MCF 10A (cell line): ENCODE measurements at regions of chr3 and their contacts with region 1.

Region 1: GRCh38 chr3:102354818-102355515 is 79.8 kb upstream of the ZPLD1 start:
- DNase-seq: peak; percentile 75
- H3K4me3 Mint-ChIP-seq: no peak overlapping the region
- H3K27ac Mint-ChIP-seq: peak overlapping the region; percentile 75
- H3K4me1 Mint-ChIP-seq: peaks cover 30% of the 10 kb centered on the region
- H3K27me3 Mint-ChIP-seq: no peaks in the 10 kb centered on the region
- CTCF ChIP-seq: no peak

Region 2: DNA sequence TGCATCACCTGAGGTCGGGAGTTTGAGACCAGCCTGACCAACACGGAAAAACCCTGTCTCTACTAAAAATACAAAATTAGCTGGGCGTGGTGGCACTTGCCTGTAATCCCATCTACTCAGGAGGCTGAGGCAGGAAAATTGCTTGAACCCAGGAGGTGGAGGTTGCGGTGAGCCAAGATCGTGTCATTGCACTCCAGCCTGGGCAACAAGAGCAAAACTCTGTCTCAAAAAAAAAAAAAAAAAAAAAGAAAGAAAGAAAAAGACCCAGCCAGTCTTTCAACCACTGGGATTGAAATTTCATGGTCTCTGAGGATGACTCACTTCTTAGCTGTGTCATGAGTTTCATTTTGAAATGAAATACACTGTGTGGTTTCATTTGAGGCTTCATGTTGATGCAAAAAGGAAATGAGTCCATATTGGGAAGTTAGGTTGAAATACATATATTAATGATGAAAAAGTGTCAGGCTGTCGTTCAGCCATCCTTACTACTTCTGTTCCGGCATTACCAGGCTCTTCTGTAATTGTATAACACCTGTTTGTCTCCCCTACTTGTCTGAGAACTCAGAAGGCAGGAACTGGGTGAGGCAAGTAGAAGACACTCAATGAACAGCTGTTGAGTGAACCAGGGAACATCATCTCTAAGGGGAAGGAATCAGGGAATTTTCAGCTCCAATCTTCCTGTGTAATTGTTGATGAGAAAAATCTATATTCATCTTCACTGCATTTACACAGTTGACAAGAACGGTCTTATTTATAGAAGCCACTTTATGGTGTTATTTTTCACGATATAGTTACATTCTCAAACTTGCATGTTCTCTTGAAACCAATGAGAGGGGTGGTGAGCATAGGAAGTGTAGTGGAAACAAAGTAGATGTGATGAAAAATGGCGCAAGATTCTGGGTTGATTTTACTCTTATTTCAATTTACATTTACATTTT is 418.3 kb before region 1 on chr3:
- CTCF ChIA-PET with region 1: no interaction called
- POLR2A ChIA-PET with region 1: no interaction called
- intact Hi-C with region 1: no loop called
- DNase-seq: peak; percentile 84
- H3K4me3 Mint-ChIP-seq: no peak overlapping the region
- H3K27ac Mint-ChIP-seq: peak overlapping the region; percentile 88
- H3K4me1 Mint-ChIP-seq: peaks cover 5% of the 10 kb centered on the region
- H3K27me3 Mint-ChIP-seq: no peaks in the 10 kb centered on the region
- CTCF ChIP-seq: no peak

Region 3: GRCh38 chr3:102235679-102236078 is 119.3 kb before region 1 on chr3:
- CTCF ChIA-PET with region 1: interaction called, 4 read pairs
- POLR2A ChIA-PET with region 1: no interaction called
- intact Hi-C with region 1: loop called (anchors 10 kb)
- DNase-seq: peak; percentile 41
- H3K4me3 Mint-ChIP-seq: no peak overlapping the region
- H3K27ac Mint-ChIP-seq: no peak overlapping the region
- H3K4me1 Mint-ChIP-seq: no peaks in the 10 kb centered on the region
- H3K27me3 Mint-ChIP-seq: no peaks in the 10 kb centered on the region
- CTCF ChIP-seq: peak; percentile 66

Region 4: GRCh38 chr3:102400766-102401165 is 45.8 kb after region 1 on chr3:
- CTCF ChIA-PET with region 1: no interaction called
- POLR2A ChIA-PET with region 1: no interaction called
- intact Hi-C with region 1: loop called (anchors 2 kb)
- DNase-seq: peak; percentile 57
- H3K4me3 Mint-ChIP-seq: no peak overlapping the region
- H3K27ac Mint-ChIP-seq: peak overlapping the region; percentile 86
- H3K4me1 Mint-ChIP-seq: peaks cover 19% of the 10 kb centered on the region
- H3K27me3 Mint-ChIP-seq: no peaks in the 10 kb centered on the region
- CTCF ChIP-seq: no peak

Region 5: GRCh38 chr3:102466001-102466400 is 111.0 kb after region 1 on chr3:
- CTCF ChIA-PET with region 1: no interaction called
- POLR2A ChIA-PET with region 1: no interaction called
- intact Hi-C with region 1: loop called (anchors 10 kb)
- DNase-seq: peak; percentile 20
- H3K4me3 Mint-ChIP-seq: no peak overlapping the region
- H3K27ac Mint-ChIP-seq: no peak overlapping the region
- H3K4me1 Mint-ChIP-seq: peaks cover 4% of the 10 kb centered on the region
- H3K27me3 Mint-ChIP-seq: no peaks in the 10 kb centered on the region
- CTCF ChIP-seq: peak; percentile 9

Region 6: DNA sequence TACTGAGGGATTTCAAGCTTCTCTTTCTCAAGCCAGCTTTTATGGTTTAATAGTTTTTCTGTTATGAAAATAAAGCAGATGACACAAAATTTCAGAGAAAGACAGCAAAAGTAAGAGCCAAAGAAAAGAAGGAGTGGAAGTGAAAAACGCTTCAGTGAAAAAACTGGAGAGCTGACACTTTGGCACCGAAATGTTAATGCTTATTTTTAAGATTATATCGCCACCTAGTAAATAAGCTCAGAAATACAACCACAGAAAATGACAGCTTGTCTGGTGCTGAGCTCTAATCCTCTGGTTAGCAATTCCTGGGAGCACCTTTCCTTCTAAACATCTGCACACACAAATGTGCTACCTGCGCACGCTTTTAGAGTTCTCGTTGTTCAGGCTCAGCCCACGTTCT is 181.5 kb after region 1 on chr3:
- CTCF ChIA-PET with region 1: no interaction called
- POLR2A ChIA-PET with region 1: no interaction called
- intact Hi-C with region 1: loop called (anchors 10 kb)
- DNase-seq: peak; percentile 55
- H3K4me3 Mint-ChIP-seq: no peak overlapping the region
- H3K27ac Mint-ChIP-seq: no peak overlapping the region
- H3K4me1 Mint-ChIP-seq: peaks cover 16% of the 10 kb centered on the region
- H3K27me3 Mint-ChIP-seq: no peaks in the 10 kb centered on the region
- CTCF ChIP-seq: peak; percentile 48